ENCODE measurements at regions of chr2 and their contacts with region 1.

Region 1: GRCh38 chr2:152489364-152489763 is 154.4 kb downstream of the FMNL2 start:
- DNase-seq: no peak
- ATAC-seq: no peak
- H3K4me3 ChIP-seq: no peak overlapping the region
- H3K27ac ChIP-seq: no peak overlapping the region
- H3K4me1 ChIP-seq: peaks cover 52% of the 10 kb centered on the region
- H3K27me3 ChIP-seq: no peaks in the 10 kb centered on the region
- CTCF ChIP-seq: no peak

Region 2: GRCh38 chr2:152458441-152458945 is 30.9 kb before region 1 on chr2:
- intact Hi-C with region 1: loop called in 1 of 2 experiments (anchors 1 kb)
- DNase-seq: no peak
- ATAC-seq: peak in 1 of 4 donors; percentile 27
- H3K4me3 ChIP-seq: no peak overlapping the region
- H3K27ac ChIP-seq: no peak overlapping the region
- H3K4me1 ChIP-seq: peaks cover 16% of the 10 kb centered on the region
- H3K27me3 ChIP-seq: no peaks in the 10 kb centered on the region
- CTCF ChIP-seq: no peak

Region 3: GRCh38 chr2:152826581-152827279 is 337.4 kb after region 1 on chr2:
- intact Hi-C with region 1: no loop called
- DNase-seq: no peak
- ATAC-seq: no peak
- H3K4me3 ChIP-seq: no peak overlapping the region
- H3K27ac ChIP-seq: no peak overlapping the region
- H3K4me1 ChIP-seq: no peaks in the 10 kb centered on the region
- H3K27me3 ChIP-seq: no peaks in the 10 kb centered on the region
- CTCF ChIP-seq: no peak

Measured in psoas muscle (tissue), 8 donors.